ENCODE measurements at regions of chr2 and their contacts with region 1.

Region 1: GRCh38 chr2:108607706-108608301 is 73.5 kb downstream of the LIMS1 start:
- DNase-seq: peak; percentile 71
- ATAC-seq: no peak
- H3K4me3 Mint-ChIP-seq: no peak overlapping the region
- H3K27ac Mint-ChIP-seq: no peak overlapping the region
- H3K4me1 Mint-ChIP-seq: peaks cover 53% of the 10 kb centered on the region
- H3K27me3 Mint-ChIP-seq: no peaks in the 10 kb centered on the region

Region 2: DNA sequence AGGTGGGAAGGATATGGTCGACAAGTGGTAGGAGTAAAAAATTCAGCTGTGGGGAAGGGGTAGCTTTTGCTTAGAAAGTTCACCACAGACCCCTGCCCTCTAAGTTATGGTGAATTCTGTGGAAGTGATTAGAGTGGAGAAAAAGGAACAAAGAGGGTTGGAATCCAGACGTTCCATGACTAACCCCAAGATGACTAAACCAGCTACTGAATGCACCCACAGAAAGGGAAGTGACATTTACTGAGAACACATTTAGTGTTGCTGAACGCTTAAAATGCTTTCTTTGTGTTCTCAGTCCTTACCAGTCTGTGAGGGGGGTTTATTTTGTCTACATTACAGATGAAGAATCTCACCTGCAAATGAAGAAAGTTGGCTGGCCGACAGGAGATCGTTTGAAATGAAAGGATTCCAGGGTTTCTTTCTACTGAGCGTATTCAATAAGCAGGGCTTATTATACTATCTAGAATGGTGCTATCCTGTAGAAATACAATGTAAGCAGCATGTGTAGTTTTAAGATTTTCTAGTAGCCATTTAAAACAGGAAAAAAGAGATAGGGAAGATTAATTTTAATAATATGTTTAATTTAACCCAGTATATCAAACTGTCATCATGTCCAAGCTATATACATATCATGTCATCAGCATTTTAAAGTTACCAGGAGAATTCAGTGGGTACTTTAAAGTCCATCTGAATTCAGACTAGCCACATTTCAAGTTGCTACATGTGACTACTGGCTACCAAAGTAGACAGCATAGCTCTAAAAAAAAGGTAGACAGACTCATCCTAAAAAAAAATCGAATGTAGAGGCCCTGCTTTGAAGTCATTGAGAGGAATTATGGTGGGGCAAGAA is 13.4 kb before region 1 on chr2:
- CTCF ChIA-PET with region 1: interaction called, 18 read pairs
- POLR2A ChIA-PET with region 1: no interaction called
- intact Hi-C with region 1: no loop called
- DNase-seq: peak; percentile 25
- ATAC-seq: peak; percentile 86
- H3K4me3 Mint-ChIP-seq: peak overlapping the region; percentile 59
- H3K27ac Mint-ChIP-seq: peak overlapping the region; percentile 83
- H3K4me1 Mint-ChIP-seq: peaks cover 56% of the 10 kb centered on the region
- H3K27me3 Mint-ChIP-seq: no peaks in the 10 kb centered on the region

Region 3: DNA sequence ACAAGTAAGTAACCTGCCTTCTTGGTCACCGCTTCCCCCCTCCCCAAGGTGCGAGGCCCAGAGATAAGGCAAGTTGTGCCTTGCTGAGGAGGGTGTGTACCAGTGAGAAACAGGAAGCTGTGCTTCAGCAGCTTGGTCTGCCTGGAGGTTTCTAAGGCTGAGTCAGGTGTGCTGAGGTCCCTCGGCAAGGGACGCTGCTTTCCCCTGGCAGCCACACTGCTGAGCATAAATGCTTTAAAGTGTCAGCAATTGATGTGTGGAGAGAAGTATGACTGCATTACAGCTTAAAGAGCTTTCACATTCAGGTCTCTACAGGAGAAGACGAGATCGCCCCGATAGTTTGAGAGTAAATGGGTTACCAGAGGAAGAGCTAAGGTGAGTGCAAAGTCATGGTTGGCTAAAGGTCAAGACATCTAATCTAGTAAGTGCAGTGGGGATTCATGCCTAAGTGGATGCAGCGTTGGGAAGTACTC is 13.3 kb after region 1 on chr2:
- CTCF ChIA-PET with region 1: interaction called, 12 read pairs
- POLR2A ChIA-PET with region 1: interaction called, 15 read pairs
- intact Hi-C with region 1: loop called (anchors 1 kb)
- DNase-seq: peak; percentile 87
- ATAC-seq: peak; percentile 95
- H3K4me3 Mint-ChIP-seq: peak overlapping the region; percentile 76
- H3K27ac Mint-ChIP-seq: peak overlapping the region; percentile 91
- H3K4me1 Mint-ChIP-seq: peaks cover 85% of the 10 kb centered on the region
- H3K27me3 Mint-ChIP-seq: no peaks in the 10 kb centered on the region

Region 4: GRCh38 chr2:108629417-108629816 is 21.6 kb after region 1 on chr2:
- CTCF ChIA-PET with region 1: interaction called, 112 read pairs
- POLR2A ChIA-PET with region 1: interaction called, 10 read pairs
- intact Hi-C with region 1: loop called in 1 of 2 experiments (anchors 1 kb)
- DNase-seq: no peak
- ATAC-seq: peak; percentile 66
- H3K4me3 Mint-ChIP-seq: peak overlapping the region; percentile 39
- H3K27ac Mint-ChIP-seq: peak overlapping the region; percentile 84
- H3K4me1 Mint-ChIP-seq: peaks cover 84% of the 10 kb centered on the region
- H3K27me3 Mint-ChIP-seq: no peaks in the 10 kb centered on the region

Region 5: GRCh38 chr2:108637304-108637669 is 29.5 kb after region 1 on chr2:
- CTCF ChIA-PET with region 1: interaction called, 112 read pairs
- POLR2A ChIA-PET with region 1: interaction called, 4 read pairs
- intact Hi-C with region 1: loop called (anchors 1 kb)
- DNase-seq: no peak
- ATAC-seq: no peak
- H3K4me3 Mint-ChIP-seq: no peak overlapping the region
- H3K27ac Mint-ChIP-seq: peak overlapping the region; percentile 60
- H3K4me1 Mint-ChIP-seq: peaks cover 73% of the 10 kb centered on the region
- H3K27me3 Mint-ChIP-seq: no peaks in the 10 kb centered on the region

Region 6: DNA sequence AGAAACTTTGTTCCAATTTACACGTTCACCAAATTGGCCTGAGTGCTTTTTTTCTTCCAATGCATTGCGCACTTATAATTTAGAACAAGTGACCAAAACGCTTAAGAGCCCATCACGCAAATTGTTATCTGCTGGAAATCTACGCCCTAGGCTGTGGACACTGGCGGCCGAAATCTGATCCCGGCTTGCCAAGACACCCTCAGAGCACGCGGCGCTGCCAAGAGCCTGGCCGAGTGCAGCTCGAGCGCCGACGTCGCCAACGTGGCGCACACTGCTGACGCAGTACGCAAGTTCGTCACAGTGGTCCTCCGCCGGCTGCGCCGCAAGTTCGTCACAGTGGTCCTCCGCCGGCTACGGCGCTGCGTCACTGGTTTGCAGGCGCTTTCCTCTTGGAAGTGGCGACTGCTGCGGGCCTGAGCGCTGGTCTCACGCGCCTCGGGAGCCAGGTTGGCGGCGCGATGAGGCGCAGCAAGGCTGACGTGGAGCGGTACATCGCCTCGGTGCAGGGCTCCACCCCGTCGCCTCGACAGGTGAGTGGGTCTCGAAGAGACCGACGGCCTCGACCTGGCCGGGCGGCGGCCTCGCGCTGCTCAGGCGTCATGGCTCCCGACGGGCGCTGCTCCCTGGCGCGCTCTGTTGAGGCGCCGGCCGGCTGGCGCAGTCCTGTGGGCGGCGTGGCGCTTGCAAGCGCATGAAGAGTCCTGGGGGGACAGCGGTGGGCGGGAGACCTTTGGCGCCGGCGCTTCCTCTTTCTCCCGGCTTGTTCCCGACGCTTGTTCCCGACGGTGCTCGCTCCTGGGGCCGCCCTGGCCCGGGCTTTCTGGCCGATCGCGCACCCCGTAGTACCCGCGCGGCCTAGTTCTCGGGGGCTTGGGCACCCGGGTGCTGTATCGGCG is 111.6 kb after region 1 on chr2 and contains the start of gene RANBP2:
- CTCF ChIA-PET with region 1: no interaction called
- POLR2A ChIA-PET with region 1: no interaction called
- intact Hi-C with region 1: loop called (anchors 5 kb)
- DNase-seq: peak; percentile 97
- ATAC-seq: peak; percentile 97
- H3K4me3 Mint-ChIP-seq: peak within 1 kb of the TSS; percentile 93
- H3K27ac Mint-ChIP-seq: peak within 1 kb of the TSS; percentile 98
- H3K4me1 Mint-ChIP-seq: peaks cover 15% of the 10 kb centered on the region
- H3K27me3 Mint-ChIP-seq: no peaks in the 10 kb centered on the region
- total RNA-seq, gene RANBP2: 68.1 to 77.1 TPM